Sigmoid colon (tissue), 7 donors: ENCODE measurements at regions of chr2 and their contacts with region 1.

Region 1: DNA sequence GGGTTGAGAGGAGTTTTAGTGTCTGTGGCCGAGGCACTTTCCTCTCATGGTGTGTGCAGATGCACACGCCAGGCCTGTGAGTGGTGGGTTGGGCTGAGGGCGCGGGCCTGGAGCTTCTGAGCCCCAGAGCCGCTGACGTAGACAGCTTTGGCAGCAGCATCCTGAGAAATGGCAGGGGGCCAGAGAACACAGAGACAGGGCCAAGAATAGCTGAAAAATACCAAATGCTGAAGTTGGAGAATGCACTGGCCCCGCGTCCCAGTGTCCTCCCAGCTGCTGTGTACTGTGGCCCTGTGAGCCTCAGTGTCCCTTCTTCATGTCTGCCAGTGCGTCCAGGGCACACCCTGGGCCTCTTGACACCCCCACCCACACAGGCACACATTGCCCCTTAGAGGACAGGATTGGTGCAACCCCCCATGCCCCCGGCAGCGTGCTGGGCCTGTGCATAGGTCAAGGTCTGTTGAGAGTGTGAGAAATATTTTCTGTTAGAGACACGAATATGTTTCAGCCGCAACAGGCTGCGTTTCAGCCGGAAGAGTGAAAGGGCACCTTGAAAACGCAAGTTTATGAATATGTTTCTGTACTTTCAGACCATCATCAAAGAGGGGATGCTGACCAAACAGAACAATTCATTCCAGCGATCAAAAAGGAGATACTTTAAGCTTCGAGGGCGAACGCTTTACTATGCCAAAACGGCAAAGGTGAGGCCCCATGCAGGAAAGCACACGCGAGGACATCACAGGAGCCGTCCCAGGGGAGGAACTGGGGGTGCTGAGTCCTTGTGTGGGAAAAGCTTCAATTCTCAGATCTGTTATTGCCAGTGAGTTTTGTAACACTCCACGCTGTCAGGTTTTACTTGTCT is 33.6 kb downstream of the DGKD start:
- DNase-seq: peak; percentile 97
- H3K4me3 ChIP-seq: peak overlapping the region in 3 of 4 donors; percentile 8 to 24 (median 21)
- H3K27ac ChIP-seq: peak overlapping the region; percentile 86 to 94 (median 88)
- H3K4me1 ChIP-seq: peaks cover 0 to 63% (median 52%) of the 10 kb centered on the region in 4 donors
- H3K27me3 ChIP-seq: no peaks in the 10 kb centered on the region
- CTCF ChIP-seq: no peak
- EP300 ChIP-seq: peak; percentile 55 to 77 (median 70)
- POLR2A ChIP-seq: peak in 1 of 2 donors; percentile 53

Region 2: GRCh38 chr2:233353769-233354499 is 34.0 kb before region 1 on chr2 and contains the start of gene DGKD:
- intact Hi-C with region 1: loop called (anchors 1 kb)
- DNase-seq: peak; percentile 76
- H3K4me3 ChIP-seq: peak within 1 kb of the TSS; percentile 63 to 81 (median 74)
- H3K27ac ChIP-seq: peak within 1 kb of the TSS; percentile 56 to 74 (median 70)
- H3K4me1 ChIP-seq: peaks cover 0 to 46% (median 36%) of the 10 kb centered on the region in 4 donors
- H3K27me3 ChIP-seq: no peaks in the 10 kb centered on the region
- CTCF ChIP-seq: peak in 2 of 4 experiments; percentile 21 to 59
- EP300 ChIP-seq: no peak
- POLR2A ChIP-seq: no peak
- total RNA-seq, gene DGKD: 10.7 to 20.6 (median 16.0) TPM